ENCODE measurements at regions of chr6 and their contacts with region 1.

Region 1: DNA sequence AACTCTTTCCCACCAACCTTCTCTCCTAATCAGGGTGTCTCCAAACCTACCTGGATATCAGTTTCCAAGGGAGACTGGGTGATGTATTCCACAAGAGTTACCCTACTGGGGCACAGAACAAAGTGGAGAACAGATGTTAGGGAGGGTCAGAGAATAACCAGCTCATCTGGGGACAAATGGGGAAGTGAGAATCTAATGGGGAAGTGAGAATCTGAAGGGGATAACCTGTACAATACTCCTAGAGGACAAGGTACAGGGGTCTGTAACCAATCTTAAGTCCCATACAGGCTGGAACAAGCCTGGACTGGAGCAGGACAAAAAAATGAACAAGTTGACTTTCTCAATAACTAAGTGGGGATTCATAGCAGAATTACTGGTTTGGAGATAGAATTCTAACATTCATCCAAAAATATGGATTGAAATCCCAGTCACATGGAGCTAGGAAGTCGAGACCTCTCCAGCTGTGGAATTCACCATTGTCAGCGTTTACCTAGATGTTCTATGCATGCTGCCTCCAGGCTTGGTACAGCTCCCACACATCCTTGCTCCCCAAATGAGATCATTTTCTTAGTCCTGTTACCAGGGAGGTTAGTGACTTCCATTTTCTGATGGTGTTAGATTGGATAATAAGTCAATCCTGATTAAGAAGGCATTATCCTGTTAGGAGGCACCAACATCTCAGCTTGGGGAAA is 214.8 kb upstream of the MOCS1 start:
- DNase-seq: no peak
- H3K4me3 ChIP-seq: no peak overlapping the region
- H3K27ac ChIP-seq: no peak overlapping the region
- H3K4me1 ChIP-seq: no peaks in the 10 kb centered on the region
- H3K27me3 ChIP-seq: no peaks in the 10 kb centered on the region
- CTCF ChIP-seq: no peak
- POLR2A ChIP-seq: no peak

Region 2: GRCh38 chr6:39496915-39497314 is 652.1 kb before region 1 on chr6:
- CTCF ChIA-PET with region 1: no interaction called
- POLR2A ChIA-PET with region 1: no interaction called
- dilution Hi-C with region 1: no loop called
- intact Hi-C with region 1: loop called (anchors 10 kb)
- DNase-seq: no peak
- H3K4me3 ChIP-seq: no peak overlapping the region
- H3K27ac ChIP-seq: no peak overlapping the region
- H3K4me1 ChIP-seq: no peaks in the 10 kb centered on the region
- H3K27me3 ChIP-seq: no peaks in the 10 kb centered on the region
- CTCF ChIP-seq: no peak
- POLR2A ChIP-seq: no peak

Region 3: DNA sequence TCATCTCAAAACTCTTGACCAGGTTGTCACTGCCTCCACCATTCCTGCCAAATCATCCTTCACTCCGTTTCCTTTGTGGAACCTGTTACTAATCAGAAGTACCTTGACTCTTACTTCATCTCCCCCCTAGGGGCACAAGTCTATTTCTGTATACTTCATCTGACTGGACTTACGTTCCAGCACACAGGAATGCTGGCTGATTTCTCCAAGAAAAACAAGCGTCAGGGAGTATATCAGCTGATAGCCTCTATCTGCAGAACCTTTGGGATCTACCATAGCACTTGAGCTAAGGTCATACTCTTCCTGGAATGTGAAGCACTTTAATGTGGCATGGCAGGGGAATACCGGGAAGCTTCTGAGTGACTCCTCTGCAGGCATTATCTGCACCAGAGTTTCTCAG is 36.7 kb before region 1 on chr6:
- CTCF ChIA-PET with region 1: no interaction called
- POLR2A ChIA-PET with region 1: no interaction called
- dilution Hi-C with region 1: no loop called
- intact Hi-C with region 1: no loop called
- DNase-seq: no peak
- H3K4me3 ChIP-seq: no peak overlapping the region
- H3K27ac ChIP-seq: no peak overlapping the region
- H3K4me1 ChIP-seq: no peaks in the 10 kb centered on the region
- H3K27me3 ChIP-seq: no peaks in the 10 kb centered on the region
- CTCF ChIP-seq: no peak
- POLR2A ChIP-seq: no peak

Region 4: GRCh38 chr6:40219799-40220198 is 70.8 kb after region 1 on chr6:
- CTCF ChIA-PET with region 1: no interaction called
- POLR2A ChIA-PET with region 1: no interaction called
- dilution Hi-C with region 1: no loop called
- intact Hi-C with region 1: no loop called
- DNase-seq: no peak
- H3K4me3 ChIP-seq: no peak overlapping the region
- H3K27ac ChIP-seq: no peak overlapping the region
- H3K4me1 ChIP-seq: no peaks in the 10 kb centered on the region
- H3K27me3 ChIP-seq: no peaks in the 10 kb centered on the region
- CTCF ChIP-seq: no peak
- POLR2A ChIP-seq: no peak

Region 5: DNA sequence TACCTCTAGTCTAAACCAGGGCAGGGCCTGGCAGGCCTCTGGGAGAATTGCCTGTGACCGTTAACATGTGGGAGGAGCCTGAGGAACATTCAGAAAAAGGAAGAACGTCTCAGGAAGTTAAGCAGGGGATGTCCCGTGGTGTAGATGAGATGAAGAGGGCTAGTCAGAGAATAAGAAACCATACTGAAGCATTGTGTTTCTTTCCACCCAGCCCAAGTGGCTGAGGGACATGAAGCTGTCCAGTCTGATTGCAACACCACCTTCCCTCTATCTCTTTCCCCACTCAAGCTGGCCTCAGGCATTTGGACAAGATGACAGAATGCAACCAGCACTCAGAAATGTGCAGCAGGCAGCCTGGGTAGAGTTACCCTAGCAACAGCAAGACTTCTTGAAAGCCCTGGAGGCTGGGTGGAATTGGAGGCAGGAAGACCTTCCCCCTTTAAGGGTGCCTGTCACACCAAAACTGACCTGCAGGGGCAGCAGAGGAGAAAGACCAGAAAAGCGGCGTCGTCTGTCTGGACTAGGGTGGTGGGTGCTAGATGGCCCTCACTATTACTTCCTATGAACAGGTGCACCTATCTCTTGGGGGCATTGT is 703.8 kb after region 1 on chr6:
- CTCF ChIA-PET with region 1: no interaction called
- POLR2A ChIA-PET with region 1: no interaction called
- dilution Hi-C with region 1: no loop called
- intact Hi-C with region 1: no loop called
- DNase-seq: no peak
- H3K4me3 ChIP-seq: no peak overlapping the region
- H3K27ac ChIP-seq: no peak overlapping the region
- H3K4me1 ChIP-seq: no peaks in the 10 kb centered on the region
- H3K27me3 ChIP-seq: peaks cover 0 to 2% of the 10 kb centered on the region in 2 experiments
- CTCF ChIP-seq: peak; percentile 41 to 54
- POLR2A ChIP-seq: no peak